ENCODE measurements at regions of chr6 and their contacts with region 1.

Region 1: DNA sequence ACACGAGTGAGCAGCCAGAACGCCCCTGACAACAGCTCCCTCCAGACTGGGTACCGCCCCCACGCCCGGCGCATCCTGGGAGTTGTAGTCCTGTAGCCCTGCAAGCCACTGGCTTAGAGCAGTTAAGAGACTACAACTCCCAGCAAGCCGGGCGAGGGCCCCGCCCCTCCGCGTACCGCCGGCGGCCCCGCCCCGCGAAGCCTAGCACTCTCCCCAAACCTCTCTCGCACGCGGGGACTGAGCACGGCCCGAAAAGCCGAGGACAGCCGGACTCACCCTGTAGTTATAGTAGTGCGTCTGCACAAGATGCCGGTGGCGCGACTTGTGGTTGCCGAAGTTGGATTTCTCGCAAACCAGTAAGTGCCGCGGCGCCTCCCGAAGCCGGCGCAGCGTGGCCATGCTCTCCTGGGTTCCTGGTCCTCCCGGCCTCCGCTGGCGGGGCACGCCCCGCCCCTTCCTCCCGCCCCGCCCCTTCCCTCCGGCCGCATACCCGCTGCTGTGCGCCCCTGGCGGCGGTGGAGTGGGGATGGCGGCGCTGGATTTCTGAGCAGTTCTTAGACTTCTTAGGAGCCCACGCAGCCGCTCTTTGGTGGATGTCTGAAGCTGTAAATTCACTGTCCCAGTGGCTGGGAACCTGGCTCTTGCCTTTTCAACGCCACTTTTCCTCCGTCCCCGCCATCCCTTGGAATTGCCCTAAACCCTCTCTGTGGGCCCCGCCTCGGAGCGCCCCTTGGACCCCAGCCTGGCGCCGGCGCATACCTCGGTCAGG is at the start of gene RPP40:
- DNase-seq: peak; percentile 99
- ATAC-seq: peak; percentile 96
- H3K4me3 Mint-ChIP-seq: peak within 1 kb of the TSS; percentile 89
- H3K27ac Mint-ChIP-seq: peak within 1 kb of the TSS; percentile 94
- H3K4me1 Mint-ChIP-seq: peaks cover 4% of the 10 kb centered on the region
- H3K27me3 Mint-ChIP-seq: no peaks in the 10 kb centered on the region
- CTCF ChIP-seq: peak; percentile 59; the same call in 1 of the 2 replicates
- total RNA-seq, gene RPP40: 10.1 to 12.2 TPM (median 10.9 TPM) in 3 replicates

Region 2: GRCh38 chr6:4632421-4632820 is 371.4 kb before region 1 on chr6:
- CTCF ChIA-PET with region 1: no interaction called
- POLR2A ChIA-PET with region 1: no interaction called
- DNase-seq: no peak
- ATAC-seq: no peak
- H3K4me3 Mint-ChIP-seq: no peak overlapping the region
- H3K27ac Mint-ChIP-seq: no peak overlapping the region
- H3K4me1 Mint-ChIP-seq: no peaks in the 10 kb centered on the region
- H3K27me3 Mint-ChIP-seq: peaks cover 4% of the 10 kb centered on the region
- CTCF ChIP-seq: no peak

Region 3: DNA sequence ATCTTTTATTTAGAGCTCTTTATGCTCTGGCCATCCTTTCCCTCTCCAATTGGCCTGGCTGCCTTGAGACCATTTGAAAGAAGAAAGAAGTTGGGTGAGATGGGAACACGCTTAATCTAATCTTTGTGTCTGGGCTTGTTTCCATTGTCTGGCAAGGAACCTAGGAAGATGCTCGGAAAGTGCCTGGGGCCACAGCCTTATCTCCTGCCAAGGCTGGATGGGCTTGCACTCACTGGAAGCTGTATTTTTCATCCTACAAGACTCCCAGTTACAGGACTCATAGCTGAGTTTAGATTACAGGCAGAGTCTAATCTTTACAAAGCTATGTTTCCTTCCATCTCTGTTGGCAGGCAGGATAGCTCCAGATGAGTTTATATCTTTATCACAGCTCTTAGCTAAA is 260.7 kb before region 1 on chr6:
- CTCF ChIA-PET with region 1: no interaction called
- POLR2A ChIA-PET with region 1: interaction called, 10 read pairs
- DNase-seq: no peak
- ATAC-seq: no peak
- H3K4me3 Mint-ChIP-seq: no peak overlapping the region
- H3K27ac Mint-ChIP-seq: no peak overlapping the region
- H3K4me1 Mint-ChIP-seq: no peaks in the 10 kb centered on the region
- H3K27me3 Mint-ChIP-seq: peaks cover 62% of the 10 kb centered on the region
- CTCF ChIP-seq: no peak

Region 4: GRCh38 chr6:4925580-4925979 is 78.2 kb before region 1 on chr6:
- CTCF ChIA-PET with region 1: interaction called, 10 read pairs
- POLR2A ChIA-PET with region 1: no interaction called
- DNase-seq: peak; percentile 39
- ATAC-seq: peak; percentile 95
- H3K4me3 Mint-ChIP-seq: no peak overlapping the region
- H3K27ac Mint-ChIP-seq: peak overlapping the region; percentile 54; the same call in 1 of the 2 replicates
- H3K4me1 Mint-ChIP-seq: peaks cover 90% of the 10 kb centered on the region
- H3K27me3 Mint-ChIP-seq: no peaks in the 10 kb centered on the region
- CTCF ChIP-seq: no peak

Region 5: DNA sequence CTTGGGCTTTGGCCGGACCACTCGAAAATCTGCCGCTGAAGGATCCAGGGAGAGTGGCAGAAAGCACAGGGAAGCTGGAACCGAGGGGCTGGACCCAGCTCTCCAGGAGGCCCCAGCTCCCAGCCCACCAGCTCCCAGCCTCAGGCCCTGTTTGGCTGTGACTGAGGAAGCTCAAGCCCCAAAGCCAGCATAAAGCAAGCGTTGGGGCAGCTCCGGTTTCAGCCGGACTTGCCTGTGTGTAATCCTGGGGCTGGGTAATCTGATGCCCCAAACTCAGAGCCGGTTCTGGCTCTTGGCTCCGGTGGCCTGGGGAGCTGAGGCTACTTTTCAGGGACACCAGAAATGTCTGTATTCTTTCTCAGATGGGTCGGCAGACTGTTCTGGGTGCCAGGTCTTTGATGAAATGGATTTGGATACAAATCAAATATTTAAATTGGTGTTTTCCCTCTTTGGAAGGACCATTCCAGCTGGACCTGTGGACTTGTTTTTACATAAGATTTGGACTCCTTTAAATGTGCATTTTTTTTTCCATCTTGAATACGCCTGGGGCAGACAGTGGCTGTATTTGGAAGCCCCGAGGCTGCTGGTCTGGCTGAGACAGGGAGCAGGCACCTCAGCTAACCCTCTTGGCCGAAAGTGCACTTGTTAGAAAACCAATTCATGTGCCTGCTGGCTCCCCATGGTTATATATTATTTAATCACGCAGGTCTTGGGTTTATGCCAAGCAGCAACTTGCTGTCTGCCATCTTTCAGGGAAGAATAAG is 29.6 kb before region 1 on chr6:
- CTCF ChIA-PET with region 1: interaction called, 12 read pairs
- POLR2A ChIA-PET with region 1: interaction called, 4 read pairs
- DNase-seq: peak; percentile 74
- ATAC-seq: peak; percentile 98
- H3K4me3 Mint-ChIP-seq: no peak overlapping the region; the same call in 1 of the 2 replicates
- H3K27ac Mint-ChIP-seq: peak overlapping the region; percentile 82
- H3K4me1 Mint-ChIP-seq: peaks cover 23% of the 10 kb centered on the region
- H3K27me3 Mint-ChIP-seq: no peaks in the 10 kb centered on the region; the same call in 1 of the 2 replicates
- CTCF ChIP-seq: no peak

Region 6: DNA sequence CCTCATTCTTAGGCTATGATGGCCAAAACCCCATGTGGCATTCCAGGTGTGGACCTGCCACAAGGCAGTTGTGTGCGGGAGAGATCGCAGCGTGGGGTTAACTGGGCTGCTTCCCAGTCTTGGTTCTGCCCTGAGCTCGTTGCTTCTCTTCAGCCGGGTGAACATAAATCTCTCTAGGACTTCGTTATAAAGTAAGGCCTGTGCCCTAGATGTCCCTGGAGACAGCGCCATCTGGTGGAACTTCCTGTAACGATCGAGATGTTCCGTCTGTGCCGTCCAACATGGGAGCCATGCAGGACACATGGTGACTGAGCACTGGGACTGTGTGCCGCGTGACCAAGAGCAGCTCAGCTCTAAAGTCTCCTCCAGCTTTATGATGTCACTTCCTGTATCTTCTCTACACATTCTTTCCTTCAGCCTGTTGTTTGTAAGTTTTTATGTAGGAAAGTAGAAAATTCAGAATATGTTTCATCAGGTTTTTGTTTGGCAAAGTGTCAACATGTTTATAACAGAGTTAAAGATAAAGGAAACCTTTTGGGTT is 26.9 kb after region 1 on chr6:
- CTCF ChIA-PET with region 1: interaction called, 20 read pairs
- POLR2A ChIA-PET with region 1: interaction called, 3 read pairs
- DNase-seq: peak; percentile 93
- ATAC-seq: peak; percentile 73
- H3K4me3 Mint-ChIP-seq: no peak overlapping the region
- H3K27ac Mint-ChIP-seq: no peak overlapping the region
- H3K4me1 Mint-ChIP-seq: peaks cover 46% of the 10 kb centered on the region
- H3K27me3 Mint-ChIP-seq: peaks cover 7% of the 10 kb centered on the region
- CTCF ChIP-seq: peak; percentile 72

Region 7: DNA sequence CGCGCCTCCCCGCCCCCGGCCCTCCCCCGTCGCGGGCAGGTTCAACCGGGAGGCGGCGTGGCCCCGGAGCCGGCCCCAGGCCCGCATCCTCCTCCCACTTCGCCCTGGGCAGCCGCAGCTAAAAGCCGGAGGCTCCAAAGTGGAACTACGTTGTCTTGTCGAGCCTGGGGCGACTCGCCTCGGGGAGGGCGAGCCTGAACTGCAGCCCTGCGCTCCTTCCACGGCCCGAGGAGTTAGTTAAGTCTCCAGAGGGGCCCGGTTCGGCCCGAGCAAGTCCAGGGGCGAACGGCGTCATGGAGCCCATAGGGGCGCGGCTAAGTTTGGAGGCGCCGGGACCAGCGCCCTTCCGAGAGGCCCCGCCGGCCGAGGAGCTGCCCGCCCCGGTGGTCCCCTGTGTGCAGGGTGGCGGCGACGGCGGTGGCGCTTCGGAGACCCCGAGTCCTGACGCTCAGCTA is 81.4 kb after region 1 on chr6 and contains the start of gene PPP1R3G:
- CTCF ChIA-PET with region 1: no interaction called
- POLR2A ChIA-PET with region 1: no interaction called
- DNase-seq: peak; percentile 29
- ATAC-seq: peak; percentile 23
- H3K4me3 Mint-ChIP-seq: peak within 1 kb of the TSS; percentile 79
- H3K27ac Mint-ChIP-seq: no peak within 1 kb of the TSS
- H3K4me1 Mint-ChIP-seq: peaks cover 10% of the 10 kb centered on the region
- H3K27me3 Mint-ChIP-seq: peaks cover 71% of the 10 kb centered on the region
- CTCF ChIP-seq: no peak
- total RNA-seq, gene PPP1R3G: 0.15 to 0.48 TPM (median 0.48 TPM) in 3 replicates

Measured in WTC11 (cell line).